Dorsolateral prefrontal cortex (tissue), 120 donors: ENCODE measurements at regions of chr18 and their contacts with region 1.

Region 1: GRCh38 chr18:79540161-79540903 is 139.3 kb upstream of the CTDP1 start:
- DNase-seq: peak in 3 of 10 donors; percentile 14 to 29 (median 26)
- H3K4me3 ChIP-seq: peak overlapping the region in 24 of 59 donors; percentile 1 to 44 (median 23)
- H3K27ac ChIP-seq: peak overlapping the region in 28 of 59 donors; percentile 7 to 99 (median 46)
- H3K27me3 ChIP-seq: peaks cover 0 to 10% (median 0%) of the 10 kb centered on the region in 45 donors
- CTCF ChIP-seq: peak in 2 of 56 donors; percentile 13 to 16

Region 2: GRCh38 chr18:79476918-79477571 is 63.3 kb before region 1 on chr18:
- intact Hi-C with region 1: no loop called
- DNase-seq: no peak
- H3K4me3 ChIP-seq: peak overlapping the region in 1 of 59 donors; percentile 29
- H3K27ac ChIP-seq: peak overlapping the region in 26 of 59 donors; percentile 3 to 90 (median 58)
- H3K27me3 ChIP-seq: no peaks in the 10 kb centered on the region
- CTCF ChIP-seq: no peak

Region 3: GRCh38 chr18:79575891-79576685 is 35.8 kb after region 1 on chr18:
- intact Hi-C with region 1: loop called in 1 of 2 experiments (anchors 5 kb)
- DNase-seq: peak in 4 of 10 donors; percentile 31 to 56 (median 34)
- H3K4me3 ChIP-seq: peak overlapping the region in 30 of 59 donors; percentile 2 to 50 (median 26)
- H3K27ac ChIP-seq: peak overlapping the region in 21 of 59 donors; percentile 5 to 77 (median 40)
- H3K27me3 ChIP-seq: no peaks in the 10 kb centered on the region
- CTCF ChIP-seq: no peak

Region 4: GRCh38 chr18:79687806-79688205 is 147.5 kb after region 1 on chr18:
- intact Hi-C with region 1: no loop called
- DNase-seq: peak in 1 of 10 donors; percentile 12
- H3K4me3 ChIP-seq: no peak overlapping the region
- H3K27ac ChIP-seq: no peak overlapping the region
- H3K27me3 ChIP-seq: no peaks in the 10 kb centered on the region
- CTCF ChIP-seq: no peak